ENCODE measurements at regions of chr16 and their contacts with region 1.

Region 1: DNA sequence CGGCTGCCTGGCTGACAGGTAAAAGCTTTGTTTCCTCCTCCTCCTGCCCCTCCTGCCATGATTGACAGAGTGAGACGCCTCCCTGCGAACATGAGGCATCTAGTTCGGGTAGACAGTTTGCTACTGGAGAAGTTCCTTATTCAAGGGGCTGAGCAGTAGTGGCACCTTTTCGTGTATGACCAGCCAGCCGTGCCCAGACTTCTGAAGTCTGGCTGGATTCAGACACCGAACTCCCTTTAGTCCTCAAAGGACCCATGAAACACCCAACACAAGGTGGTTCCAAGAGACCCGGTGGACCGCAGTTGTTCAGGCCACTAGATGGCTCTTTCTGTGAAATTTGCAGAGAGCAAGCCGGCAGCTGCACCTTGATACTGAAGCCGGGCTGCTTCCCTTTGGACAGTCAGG is 192.8 kb downstream of the XYLT1 start:
- DNase-seq: peak; percentile 25
- H3K4me3 Mint-ChIP-seq: no peak overlapping the region
- H3K27ac Mint-ChIP-seq: no peak overlapping the region
- H3K4me1 Mint-ChIP-seq: peaks cover 32% of the 10 kb centered on the region
- H3K27me3 Mint-ChIP-seq: no peaks in the 10 kb centered on the region

Region 2: DNA sequence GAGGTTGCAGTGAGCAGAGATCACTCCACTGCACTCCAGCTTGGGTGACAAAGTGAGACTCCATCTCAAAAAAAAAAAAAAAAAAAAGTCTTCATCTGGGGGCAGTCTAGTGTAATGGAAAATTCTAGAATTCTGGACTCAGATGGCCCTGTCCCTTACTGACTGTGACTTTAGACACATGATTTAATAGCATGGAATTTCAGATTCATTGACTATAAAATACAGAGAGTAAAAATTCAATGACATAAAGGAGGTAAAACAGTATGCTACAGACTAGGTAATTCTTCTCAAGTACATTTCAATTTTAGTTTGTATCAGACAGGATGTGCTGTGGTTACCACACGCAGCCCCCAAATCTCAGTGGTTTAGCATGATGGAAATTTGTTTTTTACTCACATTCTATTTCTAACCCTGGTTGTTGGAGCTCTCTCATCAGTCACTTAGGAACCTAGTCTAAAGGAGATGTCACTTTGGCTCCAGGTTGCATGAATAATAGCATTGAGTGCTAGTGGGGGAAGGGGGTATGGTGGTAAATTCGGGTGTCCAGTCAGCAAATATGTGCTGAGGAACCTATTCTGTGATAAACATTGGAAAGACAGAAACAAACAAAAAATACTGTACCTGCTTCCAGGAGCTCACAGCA is 251.3 kb before region 1 on chr16:
- CTCF ChIA-PET with region 1: no interaction called
- intact Hi-C with region 1: loop called (anchors 5 kb)
- DNase-seq: peak; percentile 67
- H3K4me3 Mint-ChIP-seq: no peak overlapping the region
- H3K27ac Mint-ChIP-seq: peak overlapping the region; percentile 47
- H3K4me1 Mint-ChIP-seq: peaks cover 30% of the 10 kb centered on the region
- H3K27me3 Mint-ChIP-seq: no peaks in the 10 kb centered on the region

Region 3: GRCh38 chr16:17304491-17305119 is 26.6 kb after region 1 on chr16:
- CTCF ChIA-PET with region 1: interaction called, 4 read pairs
- intact Hi-C with region 1: loop called (anchors 1 kb)
- DNase-seq: no peak
- H3K4me3 Mint-ChIP-seq: no peak overlapping the region
- H3K27ac Mint-ChIP-seq: peak overlapping the region; percentile 11
- H3K4me1 Mint-ChIP-seq: peaks cover 33% of the 10 kb centered on the region
- H3K27me3 Mint-ChIP-seq: no peaks in the 10 kb centered on the region

Region 4: DNA sequence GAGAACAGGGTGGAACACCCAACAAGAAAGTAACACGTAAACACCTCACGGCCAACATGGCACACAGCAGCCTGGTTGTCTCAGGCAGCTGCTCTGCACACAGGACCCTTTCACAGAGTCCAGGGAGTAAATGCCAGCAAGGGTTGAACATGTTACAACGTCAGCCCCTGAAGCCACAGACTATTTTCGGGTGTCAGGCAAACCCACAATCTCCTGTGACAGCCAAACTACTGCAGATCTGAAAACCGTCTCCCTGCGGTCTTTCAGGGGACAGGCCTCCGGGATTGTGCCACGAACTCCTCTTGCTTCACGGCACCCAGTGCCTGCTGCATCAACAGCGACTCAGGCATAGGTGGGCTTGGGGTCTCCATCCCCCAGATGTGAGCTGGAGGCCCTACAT is 65.0 kb after region 1 on chr16:
- CTCF ChIA-PET with region 1: no interaction called
- intact Hi-C with region 1: loop called (anchors 5 kb)
- DNase-seq: peak; percentile 58
- H3K4me3 Mint-ChIP-seq: no peak overlapping the region
- H3K27ac Mint-ChIP-seq: no peak overlapping the region
- H3K4me1 Mint-ChIP-seq: peaks cover 70% of the 10 kb centered on the region
- H3K27me3 Mint-ChIP-seq: no peaks in the 10 kb centered on the region

Region 5: DNA sequence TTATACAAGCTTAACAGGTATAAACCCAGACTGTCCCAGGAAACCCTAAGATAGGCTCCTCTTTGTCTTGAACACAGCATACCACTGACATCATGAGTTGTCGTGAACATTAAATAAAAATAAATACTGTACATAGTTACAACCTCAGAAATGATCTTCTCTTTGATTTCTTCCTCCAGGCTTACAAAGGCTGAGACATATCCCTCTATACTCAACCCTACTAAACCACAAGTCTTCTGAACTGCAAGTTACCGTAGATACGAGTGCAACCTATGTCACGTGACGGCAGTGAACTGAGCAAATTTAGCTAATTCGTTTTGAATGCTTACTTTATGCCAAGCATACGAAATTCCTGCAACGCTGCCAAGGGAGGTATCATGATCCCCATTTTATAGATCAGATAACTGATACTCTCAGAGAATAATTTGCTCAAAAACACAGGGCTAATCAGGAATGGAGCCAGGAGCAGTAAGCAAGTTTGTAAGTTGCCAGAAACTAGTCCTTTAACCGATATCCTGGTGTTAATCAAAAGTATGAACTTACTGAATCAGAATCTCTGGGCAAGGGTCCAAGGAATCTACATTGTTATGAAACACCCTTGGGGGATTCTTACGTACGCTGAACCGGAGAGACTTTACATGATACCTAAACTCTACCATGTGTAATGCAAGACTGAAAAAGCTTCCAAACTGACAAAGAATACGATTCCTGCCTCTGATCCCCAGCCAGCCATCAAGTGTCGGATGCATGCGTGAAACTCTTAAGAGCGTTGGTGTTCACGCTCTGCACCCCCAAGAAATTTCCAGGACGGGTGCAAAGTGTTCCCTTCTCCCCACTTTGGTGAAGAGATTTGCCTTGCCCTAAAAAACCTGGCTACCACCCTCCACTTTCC is 86.6 kb after region 1 on chr16:
- CTCF ChIA-PET with region 1: interaction called, 3 read pairs
- intact Hi-C with region 1: loop called (anchors 5 kb)
- DNase-seq: peak; percentile 78
- H3K4me3 Mint-ChIP-seq: peak overlapping the region; percentile 55
- H3K27ac Mint-ChIP-seq: peak overlapping the region; percentile 78
- H3K4me1 Mint-ChIP-seq: peaks cover 92% of the 10 kb centered on the region
- H3K27me3 Mint-ChIP-seq: no peaks in the 10 kb centered on the region

Region 6: DNA sequence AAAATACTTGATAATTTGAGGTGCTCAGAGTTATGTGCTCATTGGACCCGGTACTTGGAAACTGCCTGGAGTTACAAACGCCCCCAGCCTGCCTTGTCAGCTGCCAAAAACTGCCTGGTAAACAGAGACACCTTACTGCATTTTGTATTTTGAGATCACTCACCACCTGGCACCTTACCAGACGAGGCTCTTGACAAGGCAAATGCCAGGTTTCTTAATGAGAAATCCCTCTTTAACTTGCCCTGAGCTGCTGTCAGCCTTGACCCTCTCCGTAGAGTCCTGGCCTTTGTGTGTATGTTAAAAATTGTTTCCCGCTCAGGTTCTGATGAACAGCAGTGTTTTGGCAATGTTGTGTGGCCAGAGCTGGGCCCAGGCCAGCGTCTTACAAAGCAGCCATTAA is 1918.9 kb after region 1 on chr16:
- CTCF ChIA-PET with region 1: no interaction called
- intact Hi-C with region 1: no loop called
- DNase-seq: no peak
- H3K4me3 Mint-ChIP-seq: no peak overlapping the region
- H3K27ac Mint-ChIP-seq: no peak overlapping the region
- H3K4me1 Mint-ChIP-seq: no peaks in the 10 kb centered on the region
- H3K27me3 Mint-ChIP-seq: peaks cover 4% of the 10 kb centered on the region

Measured in activated naive CD4-positive, alpha-beta T cell treated with anti-CD3 and anti-CD28 coated beads for 36 hours (primary cell).